ENCODE measurements at regions of chr5 and their contacts with region 1.

Region 1: DNA sequence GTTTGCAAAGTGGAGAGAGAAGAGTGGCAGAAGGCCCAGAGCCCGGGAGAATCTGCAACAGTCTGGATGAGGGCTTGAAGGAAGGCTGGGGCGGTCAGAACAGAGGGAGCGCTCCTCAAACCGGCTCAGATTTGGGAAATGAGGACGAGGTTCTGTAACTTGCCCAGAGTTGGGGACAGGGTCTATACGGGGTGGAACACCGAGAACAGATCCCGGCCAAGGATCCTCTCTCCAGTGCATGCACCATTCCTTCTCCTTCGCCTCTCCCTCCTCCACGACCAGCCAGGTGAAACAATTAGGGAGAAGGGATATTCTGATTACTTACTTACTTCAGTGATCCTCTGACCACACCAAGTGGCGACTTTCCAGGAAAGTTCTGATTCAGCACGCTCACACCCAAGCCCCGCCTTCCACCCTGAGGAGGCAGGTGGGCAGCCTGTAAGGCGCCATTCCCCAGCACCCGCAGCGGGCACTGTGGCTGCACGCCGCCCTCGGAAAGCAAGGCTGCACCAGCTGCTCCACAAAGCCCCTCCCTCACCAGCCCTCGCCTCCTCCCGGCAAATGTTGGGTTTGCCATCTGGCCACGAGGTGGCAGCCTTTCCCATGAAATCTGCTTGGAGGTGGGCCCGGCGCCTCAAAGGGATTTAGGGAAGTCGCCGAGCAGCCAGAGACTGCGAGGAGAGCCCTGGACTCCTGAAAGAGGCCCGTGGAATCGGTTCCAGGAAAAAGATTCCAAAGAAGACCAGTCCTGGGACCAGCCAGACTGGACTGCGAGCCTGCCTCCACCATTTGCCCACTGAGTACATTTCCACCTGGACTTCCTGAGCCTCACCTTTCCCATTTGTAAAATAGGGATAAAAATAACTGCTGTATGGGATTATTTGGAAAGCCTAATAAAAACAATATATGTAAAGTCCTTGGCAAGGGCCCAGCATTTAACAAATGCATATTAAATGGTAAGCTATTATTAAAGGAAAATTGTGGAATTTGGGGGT is 22.2 kb upstream of the WWC1 start:
- DNase-seq: peak; percentile 92 to 96
- H3K4me3 ChIP-seq: peak overlapping the region; percentile 43
- H3K4me3 Mint-ChIP-seq: peak overlapping the region; percentile 83
- H3K27ac Mint-ChIP-seq: peak overlapping the region; percentile 86
- H3K4me1 ChIP-seq: peaks cover 23% of the 10 kb centered on the region
- H3K4me1 Mint-ChIP-seq: peaks cover 31% of the 10 kb centered on the region
- H3K27me3 ChIP-seq: no peaks in the 10 kb centered on the region
- H3K27me3 Mint-ChIP-seq: no peaks in the 10 kb centered on the region
- CTCF ChIP-seq: peak; percentile 85 to 88

Region 2: DNA sequence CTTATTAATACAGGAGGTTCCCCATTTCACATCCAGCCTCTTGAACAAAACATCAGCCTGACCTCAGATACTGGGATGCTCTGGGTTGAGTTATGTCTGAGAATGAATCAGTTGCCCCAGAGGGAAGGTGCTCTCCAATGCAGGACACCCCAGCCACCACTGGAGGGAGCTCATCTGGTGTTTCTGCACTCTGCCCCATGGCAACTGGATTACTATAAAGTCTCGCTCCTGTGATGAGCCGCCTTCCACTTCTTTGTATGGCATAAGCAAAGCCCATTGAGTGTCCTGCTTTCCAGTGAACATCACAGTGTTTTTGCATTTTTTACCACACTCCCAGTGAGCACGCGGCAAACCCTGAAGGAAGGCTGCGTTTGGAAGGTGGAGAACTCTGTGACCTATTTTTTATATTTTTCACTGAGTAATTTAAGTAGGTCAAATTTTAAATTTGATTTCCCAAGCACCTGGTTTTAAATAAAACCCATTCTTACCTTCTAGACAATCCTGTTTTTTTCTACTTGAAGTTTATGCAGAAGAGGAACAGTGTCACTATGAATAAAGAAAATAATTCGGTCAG is 154.7 kb before region 1 on chr5:
- CTCF ChIA-PET with region 1: no interaction called
- POLR2A ChIA-PET with region 1: no interaction called
- intact Hi-C with region 1: no loop called
- DNase-seq: peak; percentile 71 to 76
- H3K4me3 ChIP-seq: no peak overlapping the region
- H3K4me3 Mint-ChIP-seq: no peak overlapping the region
- H3K27ac Mint-ChIP-seq: no peak overlapping the region
- H3K4me1 ChIP-seq: no peaks in the 10 kb centered on the region
- H3K4me1 Mint-ChIP-seq: no peaks in the 10 kb centered on the region
- H3K27me3 ChIP-seq: no peaks in the 10 kb centered on the region
- H3K27me3 Mint-ChIP-seq: peaks cover 19% of the 10 kb centered on the region
- CTCF ChIP-seq: peak; percentile 72 to 83

Region 3: GRCh38 chr5:168135897-168136296 is 133.3 kb before region 1 on chr5:
- CTCF ChIA-PET with region 1: no interaction called
- POLR2A ChIA-PET with region 1: no interaction called
- intact Hi-C with region 1: no loop called
- DNase-seq: no peak
- H3K4me3 ChIP-seq: no peak overlapping the region
- H3K4me3 Mint-ChIP-seq: no peak overlapping the region
- H3K27ac Mint-ChIP-seq: no peak overlapping the region
- H3K4me1 ChIP-seq: 0 out of 2 replicates have a peak, but pooled peaks cover 7% of the 10 kb centered on the region
- H3K4me1 Mint-ChIP-seq: peaks cover 11% of the 10 kb centered on the region
- H3K27me3 ChIP-seq: no peaks in the 10 kb centered on the region; the same call in 1 of the 2 replicates
- H3K27me3 Mint-ChIP-seq: peaks cover 11% of the 10 kb centered on the region
- CTCF ChIP-seq: no peak

Region 4: GRCh38 chr5:168193493-168194250 is 75.6 kb before region 1 on chr5:
- CTCF ChIA-PET with region 1: no interaction called
- POLR2A ChIA-PET with region 1: no interaction called
- intact Hi-C with region 1: no loop called
- DNase-seq: no peak
- H3K4me3 ChIP-seq: no peak overlapping the region
- H3K4me3 Mint-ChIP-seq: no peak overlapping the region
- H3K27ac Mint-ChIP-seq: no peak overlapping the region
- H3K4me1 ChIP-seq: no peaks in the 10 kb centered on the region
- H3K4me1 Mint-ChIP-seq: no peaks in the 10 kb centered on the region
- H3K27me3 ChIP-seq: peaks cover 1% of the 10 kb centered on the region
- H3K27me3 Mint-ChIP-seq: peaks cover 23% of the 10 kb centered on the region
- CTCF ChIP-seq: no peak

Region 5: DNA sequence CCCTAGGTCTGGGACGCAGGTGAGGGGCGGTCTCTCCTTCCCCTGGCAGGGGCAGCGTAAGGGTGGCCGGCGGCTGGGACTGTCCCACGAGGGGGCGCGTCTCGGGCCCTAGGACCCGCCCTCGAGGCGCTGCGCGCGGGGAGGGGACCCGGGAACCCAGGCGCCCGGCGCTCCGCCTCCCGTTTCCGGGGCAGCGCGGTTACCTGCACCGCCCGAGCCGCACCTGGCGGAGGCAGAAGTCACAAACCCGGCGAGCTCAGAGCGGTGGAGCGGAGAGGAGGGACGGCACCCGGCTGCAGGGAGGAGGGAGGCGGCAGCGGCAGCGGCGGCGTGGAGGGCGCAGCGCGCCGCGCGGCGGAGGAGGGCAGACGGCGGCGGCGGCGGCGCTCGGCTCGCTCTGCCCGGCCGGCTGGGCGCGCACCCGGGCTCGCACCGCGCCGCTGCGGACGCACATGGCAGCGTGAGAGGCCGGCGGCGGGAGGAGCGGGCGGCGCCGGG is 22.3 kb after region 1 on chr5 and contains the start of gene WWC1:
- CTCF ChIA-PET with region 1: interaction called, 25 read pairs
- POLR2A ChIA-PET with region 1: interaction called, 11 read pairs
- intact Hi-C with region 1: loop called (anchors 1 kb)
- DNase-seq: peak; percentile 96 to 98
- H3K4me3 ChIP-seq: peak within 1 kb of the TSS; percentile 77
- H3K4me3 Mint-ChIP-seq: peak within 1 kb of the TSS; percentile 96
- H3K27ac Mint-ChIP-seq: peak within 1 kb of the TSS; percentile 95
- H3K4me1 ChIP-seq: peaks cover 72% of the 10 kb centered on the region
- H3K4me1 Mint-ChIP-seq: peaks cover 58% of the 10 kb centered on the region
- H3K27me3 ChIP-seq: no peaks in the 10 kb centered on the region
- H3K27me3 Mint-ChIP-seq: no peaks in the 10 kb centered on the region
- CTCF ChIP-seq: peak; percentile 62 to 69
- total RNA-seq, gene WWC1: 108 and 109 TPM in 2 replicates

Region 6: GRCh38 chr5:168328814-168329213 is 59.6 kb after region 1 on chr5:
- CTCF ChIA-PET with region 1: interaction called, 6 read pairs
- POLR2A ChIA-PET with region 1: interaction called, 3 read pairs
- intact Hi-C with region 1: loop called (anchors 1 kb)
- DNase-seq: peak; percentile 95 to 96
- H3K4me3 ChIP-seq: no peak overlapping the region
- H3K4me3 Mint-ChIP-seq: peak overlapping the region; percentile 57
- H3K27ac Mint-ChIP-seq: peak overlapping the region; percentile 88
- H3K4me1 ChIP-seq: peaks cover 83% of the 10 kb centered on the region
- H3K4me1 Mint-ChIP-seq: peaks cover 78% of the 10 kb centered on the region
- H3K27me3 ChIP-seq: no peaks in the 10 kb centered on the region
- H3K27me3 Mint-ChIP-seq: no peaks in the 10 kb centered on the region
- CTCF ChIP-seq: no peak

Region 7: DNA sequence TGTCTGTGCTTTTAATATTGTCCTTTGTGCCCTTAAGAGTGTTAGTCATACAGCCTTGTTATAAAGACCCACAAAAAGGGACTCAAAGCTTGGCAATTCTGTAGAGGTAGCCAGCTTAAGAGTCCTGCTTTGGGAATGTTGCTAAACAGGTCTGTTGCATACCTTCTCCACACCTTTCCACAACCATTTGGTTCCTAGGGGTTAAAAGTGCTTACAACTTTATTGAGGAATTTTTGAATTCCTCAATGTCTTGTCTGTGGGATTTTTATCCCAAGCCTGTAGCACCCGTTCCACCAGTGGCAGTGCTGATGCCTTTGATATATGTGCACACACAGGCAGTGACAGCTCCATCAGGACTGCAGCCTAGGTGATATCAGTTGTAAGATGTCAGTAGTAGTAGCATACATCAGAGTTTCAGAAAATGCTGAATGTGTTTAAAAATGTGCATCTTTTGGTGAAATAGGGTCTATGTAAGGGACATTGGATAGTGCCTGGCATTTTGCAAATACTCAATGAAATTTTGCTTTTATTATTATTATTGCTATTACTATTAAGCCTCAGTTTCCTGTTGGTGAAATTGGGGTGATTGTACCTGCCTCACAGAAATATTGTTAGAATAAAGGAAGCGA is 90.7 kb after region 1 on chr5:
- CTCF ChIA-PET with region 1: interaction called, 9 read pairs
- POLR2A ChIA-PET with region 1: no interaction called
- intact Hi-C with region 1: loop called (anchors 1 kb)
- DNase-seq: peak; percentile 83 to 87
- H3K4me3 ChIP-seq: no peak overlapping the region
- H3K4me3 Mint-ChIP-seq: peak overlapping the region; percentile 29
- H3K27ac Mint-ChIP-seq: peak overlapping the region; percentile 78
- H3K4me1 ChIP-seq: peaks cover 73% of the 10 kb centered on the region
- H3K4me1 Mint-ChIP-seq: peaks cover 72% of the 10 kb centered on the region
- H3K27me3 ChIP-seq: no peaks in the 10 kb centered on the region
- H3K27me3 Mint-ChIP-seq: no peaks in the 10 kb centered on the region
- CTCF ChIP-seq: no peak

Region 8: DNA sequence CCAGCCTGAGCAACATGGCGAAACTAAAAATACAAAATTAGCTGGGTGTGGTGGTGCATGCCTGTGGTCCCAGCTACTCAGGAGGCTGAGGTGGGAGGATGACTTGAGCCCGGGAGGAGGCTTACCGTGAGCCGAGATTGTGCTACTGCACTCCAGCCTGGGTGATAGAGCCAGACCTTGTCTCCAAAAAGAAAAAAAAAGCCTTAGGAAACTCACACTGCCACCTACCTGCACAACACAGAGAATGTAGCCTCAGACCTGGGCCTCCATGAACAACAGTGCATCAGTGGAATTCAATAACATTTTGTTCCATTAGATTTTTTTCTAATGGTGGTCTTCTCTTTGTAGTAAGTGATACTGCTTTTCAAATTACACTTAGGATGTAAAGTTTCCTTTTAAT is 153.2 kb after region 1 on chr5:
- CTCF ChIA-PET with region 1: interaction called, 4 read pairs
- POLR2A ChIA-PET with region 1: no interaction called
- intact Hi-C with region 1: loop called (anchors 1 kb)
- DNase-seq: peak in 1 of 2 experiments; percentile 32
- H3K4me3 ChIP-seq: no peak overlapping the region
- H3K4me3 Mint-ChIP-seq: no peak overlapping the region
- H3K27ac Mint-ChIP-seq: no peak overlapping the region
- H3K4me1 ChIP-seq: peaks cover 10% of the 10 kb centered on the region; the same call in 1 of the 2 replicates
- H3K4me1 Mint-ChIP-seq: peaks cover 20% of the 10 kb centered on the region
- H3K27me3 ChIP-seq: no peaks in the 10 kb centered on the region
- H3K27me3 Mint-ChIP-seq: no peaks in the 10 kb centered on the region
- CTCF ChIP-seq: peak in 1 of 2 experiments; percentile 34

Region 9: DNA sequence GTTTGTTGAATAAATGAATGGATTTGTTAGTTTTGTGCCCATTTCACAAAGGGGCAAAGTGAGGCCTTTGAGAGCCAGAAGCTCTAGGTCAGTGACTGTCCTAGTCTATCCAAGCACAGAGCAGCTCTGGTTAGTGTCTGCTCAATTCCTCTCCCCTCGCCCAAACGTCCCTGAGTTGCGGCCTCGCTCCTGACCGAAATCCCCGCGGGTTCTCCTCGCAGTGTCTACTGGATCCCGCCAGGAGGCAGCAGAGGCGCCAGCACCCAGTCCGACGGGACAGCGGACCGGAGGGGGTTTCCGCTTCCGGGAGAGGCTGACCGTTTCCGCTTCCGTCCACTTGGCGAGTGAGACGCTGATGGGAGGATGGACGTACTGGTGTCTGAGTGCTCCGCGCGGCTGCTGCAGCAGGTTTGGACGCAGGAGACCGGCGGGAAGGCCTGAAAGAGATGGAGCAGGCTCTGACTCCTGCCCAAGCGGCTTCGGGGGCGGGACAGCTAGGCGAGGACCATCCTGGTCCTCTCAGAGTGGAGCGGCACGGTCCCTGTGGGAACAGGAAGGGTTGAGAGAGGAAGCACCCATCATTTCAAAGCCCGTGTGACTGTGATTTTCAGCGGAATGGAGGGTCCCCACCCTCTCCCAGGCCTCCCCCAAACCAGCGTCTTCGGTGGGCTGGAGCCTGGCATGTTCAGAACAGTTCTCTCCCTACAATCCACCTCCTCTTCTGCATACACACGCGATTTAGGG is 217.1 kb after region 1 on chr5 and contains the start of gene RARS1:
- CTCF ChIA-PET with region 1: no interaction called
- POLR2A ChIA-PET with region 1: no interaction called
- intact Hi-C with region 1: loop called (anchors 1 kb)
- DNase-seq: peak; percentile 94 to 95
- H3K4me3 ChIP-seq: peak within 1 kb of the TSS; percentile 93
- H3K4me3 Mint-ChIP-seq: peak within 1 kb of the TSS; percentile 98
- H3K27ac Mint-ChIP-seq: peak within 1 kb of the TSS; percentile 86
- H3K4me1 ChIP-seq: peaks cover 10% of the 10 kb centered on the region
- H3K4me1 Mint-ChIP-seq: peaks cover 8% of the 10 kb centered on the region
- H3K27me3 ChIP-seq: no peaks in the 10 kb centered on the region
- H3K27me3 Mint-ChIP-seq: no peaks in the 10 kb centered on the region
- CTCF ChIP-seq: peak; percentile 93 to 96
- total RNA-seq, gene RARS1: 124 and 129 TPM in 2 replicates